Spleen (tissue), 13 donors: ENCODE measurements at regions of chr14 and their contacts with region 1.

Region 1: GRCh38 chr14:77457522-77458290 is at the starts of genes AHSA1 and VIPAS39:
- DNase-seq: peak; percentile 96
- H3K4me3 ChIP-seq: peak within 1 kb of the TSS; percentile 78 to 100 (median 94)
- H3K27ac ChIP-seq: peak within 1 kb of the TSS; percentile 80 to 98 (median 92)
- H3K4me1 ChIP-seq: peaks cover 20 to 57% (median 35%) of the 10 kb centered on the region in 6 donors
- H3K27me3 ChIP-seq: no peaks in the 10 kb centered on the region
- CTCF ChIP-seq: peak in 4 of 11 experiments; percentile 4 to 39 (median 22)
- POLR2A ChIP-seq: peak in 2 of 3 donors; percentile 6 to 22
- total RNA-seq, gene AHSA1: 55.2 to 126 (median 95.0) TPM
- total RNA-seq, gene VIPAS39: 13.4 to 24.3 (median 18.5) TPM

Region 2: DNA sequence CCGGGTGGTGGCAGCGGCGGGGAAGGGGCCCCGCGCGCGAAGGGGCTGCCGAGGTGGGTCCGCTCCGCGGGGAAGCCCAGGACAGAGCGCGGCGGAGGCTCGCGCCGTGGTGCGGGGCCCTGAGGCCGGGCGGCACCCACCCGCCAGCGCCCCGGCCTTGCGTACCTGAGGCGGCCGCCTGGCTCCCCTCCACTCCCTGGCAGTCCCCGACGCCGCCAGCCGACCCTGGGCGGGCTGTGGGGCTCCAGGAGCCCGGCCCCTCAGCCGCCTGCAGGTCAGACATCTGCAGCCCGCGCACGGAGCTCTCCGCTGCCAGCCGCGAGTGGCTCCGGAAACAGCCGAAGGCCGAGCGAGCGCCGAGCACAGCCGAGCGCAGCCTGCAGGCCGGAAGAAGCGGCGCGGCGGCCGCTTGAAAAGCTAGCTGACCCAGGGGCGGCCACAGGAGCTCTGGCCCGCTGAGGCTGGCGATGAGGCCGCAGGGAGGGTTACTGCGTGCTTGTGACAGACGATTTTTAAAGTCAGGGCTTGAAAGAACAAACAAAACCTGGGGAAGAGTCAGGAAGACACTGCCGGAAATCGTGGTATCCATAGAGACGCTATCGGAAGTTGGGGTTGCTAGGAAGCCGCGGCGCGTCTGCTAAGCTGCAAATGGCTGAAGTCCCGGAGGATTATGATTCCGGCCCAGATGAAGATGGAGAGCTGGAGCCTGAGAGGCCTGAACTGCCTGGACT is 80.8 kb before region 1 on chr14 and contains the starts of genes SAMD15 and TMED8:
- intact Hi-C with region 1: loop called (anchors 5 kb)
- DNase-seq: peak; percentile 98
- H3K4me3 ChIP-seq: peak within 1 kb of the TSS; percentile 82 to 100 (median 98)
- H3K27ac ChIP-seq: peak within 1 kb of the TSS; percentile 78 to 95 (median 91)
- H3K4me1 ChIP-seq: peaks cover 12 to 68% (median 42%) of the 10 kb centered on the region in 6 donors
- H3K27me3 ChIP-seq: no peaks in the 10 kb centered on the region
- CTCF ChIP-seq: peak in 8 of 11 experiments; percentile 34 to 66 (median 47)
- POLR2A ChIP-seq: peak in 1 of 3 donors; percentile 31
- total RNA-seq, gene SAMD15: 0.32 to 1.7 (median 0.79) TPM
- total RNA-seq, gene TMED8: 18.8 to 32.3 (median 22.4) TPM

Region 3: GRCh38 chr14:77554207-77554606 is 96.5 kb after region 1 on chr14:
- intact Hi-C with region 1: loop called (anchors 10 kb)
- DNase-seq: no peak
- H3K4me3 ChIP-seq: peak overlapping the region in 2 of 8 donors; percentile 3 to 11
- H3K27ac ChIP-seq: peak overlapping the region; percentile 10 to 83 (median 72)
- H3K4me1 ChIP-seq: peaks cover 0 to 36% (median 20%) of the 10 kb centered on the region in 6 donors
- H3K27me3 ChIP-seq: no peaks in the 10 kb centered on the region
- CTCF ChIP-seq: no peak
- POLR2A ChIP-seq: no peak

Region 4: DNA sequence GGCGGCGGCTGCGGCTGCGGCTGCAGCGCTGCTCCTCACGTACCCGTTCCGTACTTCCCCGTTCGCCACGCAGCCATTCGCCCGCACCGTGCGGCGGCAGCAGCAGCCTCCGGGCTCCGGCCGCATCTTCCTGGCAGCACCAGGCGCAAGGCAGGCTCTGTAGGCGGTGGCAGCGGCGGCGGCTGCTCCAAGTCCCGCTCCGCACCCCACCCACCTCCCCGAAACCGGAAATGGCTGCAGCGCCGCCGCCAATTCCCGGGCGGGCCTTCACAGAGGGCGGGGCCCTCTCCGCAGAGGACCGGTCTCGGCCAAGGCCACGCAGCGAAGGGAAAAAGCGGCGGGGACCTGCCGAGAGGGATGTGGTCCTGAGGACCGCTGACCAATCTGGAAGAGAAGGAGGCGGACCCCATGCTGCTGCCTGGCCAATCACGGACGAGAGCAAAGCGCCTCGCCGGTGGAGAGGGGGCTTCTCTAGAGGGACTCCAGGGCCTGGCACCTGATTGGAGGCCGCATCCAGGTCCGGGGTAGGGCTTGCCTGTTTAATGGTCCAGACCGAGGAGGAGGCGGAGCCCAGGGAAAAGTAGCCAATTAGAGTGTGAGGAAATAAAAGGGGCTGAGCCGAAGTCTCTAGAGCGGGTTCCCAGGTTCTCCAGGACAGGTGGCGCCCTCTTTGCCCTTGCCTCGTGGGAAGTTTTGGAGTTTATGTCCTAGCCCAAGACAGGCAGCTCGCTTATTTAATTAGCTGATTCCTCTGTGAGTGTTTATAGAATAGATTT is 158.9 kb after region 1 on chr14 and contains the start of gene SPTLC2:
- intact Hi-C with region 1: loop called (anchors 10 kb)
- DNase-seq: peak; percentile 100
- H3K4me3 ChIP-seq: peak within 1 kb of the TSS; percentile 88 to 99 (median 96)
- H3K27ac ChIP-seq: peak within 1 kb of the TSS; percentile 81 to 97 (median 92)
- H3K4me1 ChIP-seq: peaks cover 10 to 63% (median 44%) of the 10 kb centered on the region in 6 donors
- H3K27me3 ChIP-seq: no peaks in the 10 kb centered on the region
- CTCF ChIP-seq: peak in 3 of 11 experiments; percentile 14 to 49 (median 21)
- POLR2A ChIP-seq: peak; percentile 59 to 85 (median 67)
- total RNA-seq, gene SPTLC2: 62.0 to 103 (median 79.7) TPM

Region 5: GRCh38 chr14:77714926-77715325 is 257.2 kb after region 1 on chr14:
- intact Hi-C with region 1: loop called (anchors 10 kb)
- DNase-seq: no peak
- H3K4me3 ChIP-seq: no peak overlapping the region
- H3K27ac ChIP-seq: peak overlapping the region in 7 of 8 donors; percentile 15 to 69 (median 51)
- H3K4me1 ChIP-seq: peaks cover under 1 to 39% (median 14%) of the 10 kb centered on the region in 6 donors
- H3K27me3 ChIP-seq: no peaks in the 10 kb centered on the region
- CTCF ChIP-seq: no peak
- POLR2A ChIP-seq: no peak